ENCODE measurements at regions of chr2 and their contacts with region 1.

Region 1: DNA sequence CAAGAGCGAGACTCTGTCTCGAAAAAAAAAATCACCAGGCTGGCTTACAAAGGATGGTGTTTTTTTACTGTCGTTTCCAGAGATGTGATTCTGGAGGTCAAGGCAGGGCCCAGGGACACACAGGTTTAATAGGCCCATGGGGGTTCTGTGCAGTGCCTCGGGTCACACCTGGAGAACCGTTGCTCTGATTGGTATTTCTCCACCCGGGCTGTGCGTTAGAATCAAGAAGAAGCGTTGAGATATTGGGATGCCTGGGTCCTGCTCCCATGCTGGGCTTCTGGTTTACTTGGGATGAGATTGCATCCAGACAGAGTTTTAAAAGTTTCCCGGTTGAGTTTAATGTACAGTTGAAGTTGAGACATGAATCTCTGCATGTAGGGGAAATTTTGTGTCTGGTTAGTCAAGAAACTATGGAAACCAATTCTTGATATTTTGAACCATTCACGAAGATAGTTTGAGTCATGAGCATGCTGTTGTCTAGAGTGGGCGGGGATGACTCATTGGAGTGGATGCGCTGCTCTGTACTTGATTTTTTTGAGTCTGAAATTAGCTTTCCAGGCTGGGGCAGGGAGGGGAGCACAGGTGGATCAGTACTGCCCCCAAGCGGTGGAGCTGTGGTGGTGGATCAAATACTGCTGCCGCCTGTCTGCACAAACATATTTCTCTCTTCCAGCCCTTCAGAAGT is 50.1 kb downstream of the GREB1 start:
- DNase-seq: peak; percentile 95
- H3K4me3 ChIP-seq: no peak overlapping the region; a peak in 1 of 4 replicates
- H3K27ac ChIP-seq: peak overlapping the region in 1 of 2 experiments; percentile 80; a peak in 2 of 4 replicates
- H3K4me1 ChIP-seq: no peaks in the 10 kb centered on the region; a peak in 2 of 4 replicates
- H3K27me3 ChIP-seq: no peaks in the 10 kb centered on the region
- CTCF ChIP-seq: peak; percentile 100
- EP300 ChIP-seq: peak in 1 of 2 experiments; percentile 12; a peak in 1 of 4 replicates
- RAD21 ChIP-seq: peak; percentile 100

Region 2: GRCh38 chr2:11140492-11140891 is 443.5 kb before region 1 on chr2:
- CTCF ChIA-PET with region 1: interaction called, 18 read pairs
- POLR2A ChIA-PET with region 1: no interaction called
- DNase-seq: no peak
- H3K4me3 ChIP-seq: no peak overlapping the region
- H3K27ac ChIP-seq: peak overlapping the region in 1 of 2 experiments; percentile 66; a peak in 2 of 4 replicates
- H3K4me1 ChIP-seq: no peaks in the 10 kb centered on the region
- H3K27me3 ChIP-seq: no peaks in the 10 kb centered on the region
- CTCF ChIP-seq: no peak
- EP300 ChIP-seq: peak in 1 of 2 experiments; percentile 85; a peak in 3 of 4 replicates
- RAD21 ChIP-seq: no peak

Region 3: GRCh38 chr2:11465497-11466406 is 118.2 kb before region 1 on chr2 and contains the start of gene E2F6:
- CTCF ChIA-PET with region 1: interaction called, 189 read pairs
- POLR2A ChIA-PET with region 1: no interaction called
- DNase-seq: peak; percentile 98
- H3K4me3 ChIP-seq: peak within 1 kb of the TSS; percentile 64 to 72
- H3K27ac ChIP-seq: peak within 1 kb of the TSS; percentile 86 to 90
- H3K4me1 ChIP-seq: peaks cover 16 to 27% of the 10 kb centered on the region in 2 experiments
- H3K27me3 ChIP-seq: no peaks in the 10 kb centered on the region
- CTCF ChIP-seq: no peak
- EP300 ChIP-seq: peak; percentile 48 to 72
- RAD21 ChIP-seq: no peak
- polyA plus RNA-seq, gene E2F6: 15.3 and 19.7 TPM in 2 replicates

Region 4: GRCh38 chr2:11515490-11515981 is 68.4 kb before region 1 on chr2:
- CTCF ChIA-PET with region 1: interaction called, 29 read pairs
- POLR2A ChIA-PET with region 1: no interaction called
- DNase-seq: no peak
- H3K4me3 ChIP-seq: no peak overlapping the region
- H3K27ac ChIP-seq: no peak overlapping the region
- H3K4me1 ChIP-seq: no peaks in the 10 kb centered on the region; a peak in 1 of 4 replicates
- H3K27me3 ChIP-seq: no peaks in the 10 kb centered on the region
- CTCF ChIP-seq: no peak
- EP300 ChIP-seq: no peak
- RAD21 ChIP-seq: no peak

Region 5: DNA sequence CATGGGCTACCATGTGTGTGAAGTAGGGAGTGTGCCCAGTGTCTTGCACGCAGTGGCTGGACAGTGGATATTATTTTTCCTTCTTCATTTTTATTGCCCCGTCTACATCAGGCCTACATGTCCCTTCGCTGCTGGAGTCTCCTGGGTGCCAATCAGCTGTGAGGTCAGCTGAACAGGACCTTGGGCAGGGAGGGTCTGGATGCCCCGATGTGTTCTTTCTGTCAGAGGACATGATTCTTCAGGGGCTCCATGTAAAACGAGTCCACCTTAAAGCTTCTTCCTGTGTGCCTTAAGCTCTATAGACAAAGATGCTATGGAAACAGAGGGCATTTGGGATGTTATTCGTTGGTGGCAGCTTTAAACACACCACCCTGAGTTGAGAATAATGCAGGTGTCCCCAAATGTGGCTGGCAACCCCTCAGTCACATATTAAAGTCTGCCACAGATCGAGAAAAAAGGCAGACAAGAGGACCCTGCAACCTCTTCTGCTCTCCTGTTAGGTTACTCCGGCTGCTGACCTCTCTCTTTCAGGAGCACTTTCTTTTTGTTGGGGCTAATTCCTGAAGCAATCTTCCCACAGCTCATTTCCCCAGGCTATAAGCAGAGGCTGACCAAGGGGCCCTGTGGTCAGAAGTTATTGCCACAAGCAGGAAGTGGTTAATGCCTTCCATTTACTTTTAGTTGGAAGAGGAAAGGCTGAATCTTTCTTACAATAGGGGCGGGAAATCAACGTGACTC is 30.2 kb before region 1 on chr2:
- CTCF ChIA-PET with region 1: interaction called, 294 read pairs
- POLR2A ChIA-PET with region 1: no interaction called
- DNase-seq: no peak
- H3K4me3 ChIP-seq: no peak overlapping the region
- H3K27ac ChIP-seq: no peak overlapping the region
- H3K4me1 ChIP-seq: peaks cover 0 to 32% of the 10 kb centered on the region in 2 experiments; a peak in 2 of 4 replicates
- H3K27me3 ChIP-seq: 0 out of 2 replicates have a peak, but pooled peaks cover 4% of the 10 kb centered on the region
- CTCF ChIP-seq: no peak
- EP300 ChIP-seq: no peak
- RAD21 ChIP-seq: no peak

Region 6: GRCh38 chr2:11621410-11621809 is 37.4 kb after region 1 on chr2:
- CTCF ChIA-PET with region 1: interaction called, 15 read pairs
- POLR2A ChIA-PET with region 1: no interaction called
- DNase-seq: no peak
- H3K4me3 ChIP-seq: no peak overlapping the region
- H3K27ac ChIP-seq: peak overlapping the region in 1 of 2 experiments; percentile 34; a peak in 1 of 4 replicates
- H3K4me1 ChIP-seq: peaks cover 0 to 11% of the 10 kb centered on the region in 2 experiments; a peak in 1 of 4 replicates
- H3K27me3 ChIP-seq: no peaks in the 10 kb centered on the region
- CTCF ChIP-seq: no peak
- EP300 ChIP-seq: no peak
- RAD21 ChIP-seq: no peak

Region 7: GRCh38 chr2:12032398-12032797 is 448.4 kb after region 1 on chr2:
- CTCF ChIA-PET with region 1: no interaction called
- POLR2A ChIA-PET with region 1: no interaction called
- DNase-seq: no peak
- H3K4me3 ChIP-seq: no peak overlapping the region
- H3K27ac ChIP-seq: no peak overlapping the region
- H3K4me1 ChIP-seq: peaks cover 0 to 10% of the 10 kb centered on the region in 2 experiments; a peak in 2 of 4 replicates
- H3K27me3 ChIP-seq: no peaks in the 10 kb centered on the region
- CTCF ChIP-seq: no peak
- EP300 ChIP-seq: no peak
- RAD21 ChIP-seq: no peak